Right ventricle myocardium superior (tissue), 1 donor: ENCODE measurements at regions of chr11 and their contacts with region 1.

Region 1: GRCh38 chr11:11036848-11037732 is 179.2 kb upstream of the ZBED5 start:
- DNase-seq: no peak
- ATAC-seq: peak; percentile 89

Region 2: GRCh38 chr11:10973416-10973815 is 63.7 kb before region 1 on chr11:
- intact Hi-C with region 1: no loop called
- DNase-seq: no peak
- ATAC-seq: no peak

Region 3: DNA sequence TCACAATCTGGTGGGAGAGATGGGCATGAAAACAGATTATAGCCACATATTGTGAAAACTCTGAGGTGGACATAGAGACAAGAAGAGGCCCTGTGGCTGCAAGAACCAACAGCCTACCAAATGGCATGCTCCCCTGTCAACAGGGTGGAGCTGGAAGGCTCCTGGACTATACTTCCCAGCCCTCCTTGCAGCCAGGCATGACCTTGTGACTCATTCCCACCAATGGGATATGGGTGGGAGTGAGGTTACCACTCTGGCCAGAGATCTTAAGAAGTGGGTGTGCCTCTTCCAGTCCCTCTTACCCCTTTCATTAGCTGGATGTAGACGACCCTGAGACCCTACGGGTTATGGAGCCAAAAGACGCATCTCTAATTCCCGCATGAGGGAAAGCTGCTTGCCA is 52.8 kb before region 1 on chr11:
- intact Hi-C with region 1: no loop called
- DNase-seq: no peak
- ATAC-seq: no peak

Region 4: DNA sequence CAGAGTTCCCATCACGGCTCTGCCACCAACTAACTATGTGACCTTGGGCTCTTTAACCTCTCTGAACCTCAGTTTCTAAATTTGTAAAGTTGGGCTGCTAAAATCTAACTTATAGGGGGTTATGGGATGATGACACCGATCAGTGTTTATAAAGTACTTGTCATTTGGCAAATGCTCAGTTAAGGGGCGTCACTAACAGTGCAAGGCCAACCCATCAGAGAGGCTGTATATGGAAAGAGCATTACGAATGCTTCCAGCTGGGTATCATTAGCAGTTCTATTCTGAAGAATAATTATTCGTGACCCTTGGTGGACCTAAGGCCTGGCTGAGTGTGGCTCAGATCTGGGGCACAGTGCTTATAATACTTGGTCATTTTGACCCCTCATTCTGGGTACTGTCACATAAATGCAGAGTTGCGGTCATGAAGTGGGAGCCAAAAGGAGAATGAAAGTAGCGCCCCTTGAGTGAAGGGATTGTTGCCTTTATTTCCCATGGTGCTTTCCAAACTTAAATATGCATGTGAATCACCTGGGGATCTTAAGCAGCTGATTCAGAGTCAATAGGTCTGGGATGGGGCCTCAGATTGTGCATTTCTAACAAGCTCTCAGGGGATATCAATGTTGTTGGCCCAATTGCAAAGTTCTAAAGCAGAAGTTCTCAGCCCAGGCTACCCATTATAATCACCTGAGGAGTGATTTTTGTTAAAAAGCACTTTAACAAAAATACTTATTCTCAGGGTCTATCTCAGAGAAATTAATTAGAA is 200.2 kb after region 1 on chr11:
- intact Hi-C with region 1: no loop called
- DNase-seq: no peak
- ATAC-seq: no peak

Region 5: GRCh38 chr11:11265994-11266606 is 229.0 kb after region 1 on chr11:
- intact Hi-C with region 1: loop called (anchors 10 kb)
- DNase-seq: peak; percentile 59
- ATAC-seq: peak; percentile 73

Region 6: GRCh38 chr11:11787305-11788062 is 750.4 kb after region 1 on chr11:
- intact Hi-C with region 1: loop called (anchors 2 kb)
- DNase-seq: peak; percentile 74
- ATAC-seq: peak; percentile 97